Sciatic nerve (tissue), 2 donors: ENCODE measurements at regions of chr19 and their contacts with region 1.

Region 1: GRCh38 chr19:49451430-49452181 is at the start of gene PIH1D1:
- DNase-seq: peak; percentile 97
- ATAC-seq: peak; percentile 84
- total RNA-seq, gene PIH1D1: 73.2 TPM

Region 2: GRCh38 chr19:47540728-47541127 is 1910.9 kb before region 1 on chr19:
- intact Hi-C with region 1: loop called (anchors 5 kb)
- DNase-seq: no peak
- ATAC-seq: no peak

Region 3: DNA sequence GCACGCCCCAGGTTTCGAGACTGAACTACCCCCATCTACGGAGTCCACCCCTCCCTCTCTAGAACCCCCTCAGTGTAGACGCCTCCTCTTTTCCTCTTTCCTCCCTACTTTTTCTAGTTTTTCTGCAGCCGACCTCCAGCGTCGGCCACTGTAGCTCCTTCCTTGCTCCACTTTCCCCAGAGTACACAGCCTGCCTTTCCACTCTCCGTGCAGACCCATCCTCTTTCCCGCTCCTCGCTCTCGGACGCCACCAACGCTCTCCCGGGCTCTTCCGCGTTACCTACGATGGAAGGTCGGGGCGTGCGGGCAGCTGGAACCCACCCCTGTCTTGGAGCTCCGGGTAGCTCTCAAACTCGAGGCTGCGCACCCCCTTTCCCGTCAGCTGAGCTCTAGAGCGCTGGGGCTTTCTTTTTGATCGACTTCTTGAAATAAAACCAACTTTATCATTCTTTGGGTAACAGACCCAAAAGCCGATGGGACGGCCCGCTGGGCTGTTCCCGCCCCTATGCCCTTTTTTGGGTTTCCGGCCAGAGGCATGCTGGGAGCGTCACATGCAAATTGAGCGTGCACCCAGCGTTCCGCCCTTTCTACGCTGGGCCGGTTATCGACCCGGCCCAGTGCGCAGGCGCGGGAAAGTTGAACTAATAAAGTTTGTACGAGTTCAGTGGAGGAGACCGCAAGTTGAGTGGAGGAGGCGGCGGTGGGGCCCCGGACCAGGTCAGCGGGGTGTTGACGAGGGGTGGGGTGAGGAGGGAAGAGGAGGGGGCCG is 213.9 kb after region 1 on chr19 and contains the starts of genes BCL2L12 and IRF3:
- intact Hi-C with region 1: loop called (anchors 5 kb)
- DNase-seq: peak; percentile 100
- ATAC-seq: peak; percentile 97
- total RNA-seq, gene BCL2L12: 11.5 TPM
- total RNA-seq, gene IRF3: 76.7 TPM